ENCODE measurements at regions of chr2 and their contacts with region 1.

Region 1: DNA sequence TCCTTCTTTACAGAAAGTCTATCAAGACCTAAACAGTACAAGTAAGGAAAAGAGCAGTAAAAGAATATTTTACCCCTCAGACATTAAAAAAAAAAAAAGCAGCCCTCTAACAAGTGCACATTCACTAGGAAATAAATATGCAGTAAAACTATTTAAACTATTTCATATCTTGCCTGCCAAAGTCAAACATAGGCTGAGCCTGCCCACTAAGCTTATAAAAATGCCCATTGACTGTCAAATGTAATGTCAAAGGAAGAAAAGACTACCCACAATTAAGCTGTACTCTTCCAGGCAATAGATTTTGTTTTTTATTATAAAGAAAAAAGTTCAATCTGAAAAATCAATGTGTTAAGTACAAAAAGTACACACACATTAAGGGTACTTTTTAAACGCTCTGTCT is 11.8 kb downstream of the ALS2 start:
- DNase-seq: no peak
- CTCF ChIP-seq: no peak

Region 2: GRCh38 chr2:201758234-201758633 is 10.7 kb before region 1 on chr2:
- CTCF ChIA-PET with region 1: interaction called, 12 read pairs
- POLR2A ChIA-PET with region 1: no interaction called
- DNase-seq: no peak
- CTCF ChIP-seq: no peak

Region 3: DNA sequence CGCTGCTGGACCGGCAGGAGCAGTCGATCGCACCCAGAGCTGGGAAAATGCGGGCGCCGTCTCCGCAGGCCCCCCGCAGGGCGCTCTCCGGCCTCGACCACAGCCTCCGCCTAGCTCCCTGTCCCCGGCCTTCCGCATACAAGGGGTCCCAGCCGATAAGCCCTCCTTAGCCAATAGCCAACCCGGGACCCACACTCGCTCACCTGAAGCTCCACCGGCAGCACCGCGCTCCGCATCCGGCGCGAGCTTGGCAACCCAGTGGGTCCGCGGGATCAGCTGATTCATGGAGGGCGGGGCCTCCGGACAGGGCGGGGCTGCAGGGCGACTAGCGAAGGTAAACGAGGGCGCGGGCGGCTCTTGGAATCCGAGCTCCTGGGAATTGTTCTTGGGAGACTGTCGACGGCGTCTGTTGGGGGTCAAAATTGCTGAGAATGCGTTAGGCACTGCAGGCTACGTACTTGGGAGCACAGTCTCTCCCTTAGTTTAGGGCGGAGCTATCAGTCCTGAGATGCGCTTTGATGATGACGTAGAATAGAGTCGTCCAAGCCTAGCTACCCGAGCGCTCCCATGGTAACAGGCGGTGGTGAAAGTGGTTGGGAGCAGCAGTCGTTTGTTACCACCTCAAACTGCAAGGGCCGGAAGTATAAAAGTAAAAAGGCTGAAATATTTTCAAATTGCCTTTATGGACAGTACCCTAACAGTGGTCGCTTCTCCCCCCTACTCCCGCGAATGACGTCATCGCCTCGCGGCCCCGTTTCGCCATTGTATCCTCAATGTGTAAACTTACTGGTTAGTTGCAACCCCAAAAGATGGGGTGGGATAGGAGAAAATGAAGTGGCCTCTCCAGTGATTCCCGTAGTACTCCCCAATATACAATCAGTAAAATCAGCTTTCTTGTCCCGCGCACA is 12.0 kb after region 1 on chr2 and contains the start of gene ALS2:
- CTCF ChIA-PET with region 1: interaction called, 12 read pairs
- POLR2A ChIA-PET with region 1: no interaction called
- DNase-seq: peak; percentile 92
- CTCF ChIP-seq: no peak

Measured in GM10248 (cell line).